ENCODE measurements at regions of chr12 and their contacts with region 1.

Region 1: DNA sequence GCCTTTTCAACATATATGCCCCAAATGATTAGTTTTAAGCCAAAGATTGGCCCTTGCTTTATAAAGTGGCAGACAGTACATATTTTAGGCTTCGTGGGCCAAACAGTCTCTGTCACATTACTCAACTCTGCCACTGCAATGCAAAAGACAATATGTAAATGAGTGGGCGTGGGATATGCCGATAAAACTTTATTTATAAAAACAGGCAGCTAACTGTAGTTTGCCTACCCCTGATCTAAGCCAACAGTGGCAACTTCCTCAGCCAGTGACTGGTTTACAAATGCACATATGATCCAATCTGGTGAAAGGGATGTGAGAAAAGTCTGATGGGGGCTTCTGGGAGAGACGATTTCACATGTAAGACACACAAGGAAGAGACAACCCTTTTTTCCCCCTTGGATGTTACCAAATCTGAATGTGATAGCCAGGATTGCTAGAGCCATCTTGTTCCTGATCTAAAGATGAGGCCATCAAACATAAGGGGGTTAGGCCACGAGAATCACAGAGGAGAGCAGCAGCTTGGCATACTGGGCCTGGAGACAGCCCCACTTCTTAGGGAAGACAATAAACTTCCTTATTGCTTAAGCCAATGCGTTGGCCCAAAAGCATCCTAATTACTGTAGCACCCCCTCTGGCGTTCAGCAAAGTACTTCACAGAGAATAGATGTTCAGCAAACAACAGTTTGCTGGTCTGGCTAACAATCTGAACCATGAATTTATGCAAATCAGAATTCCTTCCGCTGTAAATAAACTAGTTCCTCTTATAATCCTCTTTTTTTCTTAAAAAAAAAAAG is 75.2 kb upstream of the TMCC3 start:
- DNase-seq: no peak
- H3K4me3 ChIP-seq: no peak overlapping the region
- H3K27ac ChIP-seq: no peak overlapping the region
- H3K27me3 ChIP-seq: no peaks in the 10 kb centered on the region
- CTCF ChIP-seq: peak in 43 of 56 donors; percentile 12 to 58 (median 34)

Region 2: DNA sequence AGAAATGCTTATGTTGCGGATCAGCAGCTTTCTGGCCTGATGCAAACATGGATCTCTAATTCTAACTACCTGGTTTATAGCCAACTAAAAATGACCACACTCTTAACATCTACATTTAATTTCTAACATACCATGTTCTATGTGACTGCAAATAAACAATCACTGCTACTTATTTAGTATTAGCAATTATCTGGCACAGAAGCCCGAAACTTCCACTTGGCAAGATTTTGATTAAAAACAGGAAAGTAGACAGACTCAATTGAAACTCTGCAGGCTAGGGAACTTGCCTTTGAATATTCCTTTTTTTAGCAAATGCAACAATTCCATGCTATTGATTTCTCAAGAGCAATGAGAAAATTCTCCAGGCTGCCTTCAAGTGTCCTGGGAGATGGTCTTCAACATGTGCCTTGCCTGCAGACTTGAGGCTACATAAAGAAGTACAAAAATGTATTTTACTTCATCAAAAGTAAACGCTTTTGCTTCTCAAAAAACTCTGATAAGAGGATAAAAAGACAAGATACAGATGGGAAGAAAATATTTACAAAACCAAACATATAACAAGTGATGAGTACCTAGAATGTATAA is 66.1 kb before region 1 on chr12:
- intact Hi-C with region 1: loop called in 1 of 2 experiments (anchors 5 kb)
- DNase-seq: no peak
- H3K4me3 ChIP-seq: no peak overlapping the region
- H3K27ac ChIP-seq: no peak overlapping the region
- H3K27me3 ChIP-seq: no peaks in the 10 kb centered on the region
- CTCF ChIP-seq: no peak

Measured in dorsolateral prefrontal cortex (tissue), 120 donors.